ENCODE measurements at regions of chr7 and their contacts with region 1.

Region 1: GRCh38 chr7:137909037-137909436 is 62.3 kb upstream of the DGKI start:
- DNase-seq: no peak
- ATAC-seq: peak in 1 of 4 donors; percentile 7
- H3K4me3 ChIP-seq: no peak overlapping the region
- H3K27ac ChIP-seq: no peak overlapping the region
- H3K4me1 ChIP-seq: no peaks in the 10 kb centered on the region
- H3K27me3 ChIP-seq: no peaks in the 10 kb centered on the region
- CTCF ChIP-seq: no peak
- POLR2A ChIP-seq: no peak

Region 2: GRCh38 chr7:137961200-137962177 is 52.5 kb after region 1 on chr7:
- intact Hi-C with region 1: no loop called
- DNase-seq: no peak
- ATAC-seq: peak; percentile 34 to 69 (median 60)
- H3K4me3 ChIP-seq: no peak overlapping the region
- H3K27ac ChIP-seq: no peak overlapping the region
- H3K4me1 ChIP-seq: peaks cover 0 to 12% (median 3%) of the 10 kb centered on the region in 4 donors
- H3K27me3 ChIP-seq: no peaks in the 10 kb centered on the region
- CTCF ChIP-seq: no peak
- POLR2A ChIP-seq: no peak

Region 3: GRCh38 chr7:138008547-138009349 is 99.7 kb after region 1 on chr7:
- intact Hi-C with region 1: loop called (anchors 5 kb)
- DNase-seq: no peak
- ATAC-seq: peak; percentile 84 to 95 (median 92)
- H3K4me3 ChIP-seq: no peak overlapping the region
- H3K27ac ChIP-seq: no peak overlapping the region
- H3K4me1 ChIP-seq: peaks cover 0 to 4% (median 0%) of the 10 kb centered on the region in 4 donors
- H3K27me3 ChIP-seq: no peaks in the 10 kb centered on the region
- CTCF ChIP-seq: peak; percentile 86 to 93 (median 90)
- POLR2A ChIP-seq: no peak